CD8-positive, alpha-beta T cell (primary cell): ENCODE measurements at regions of chr15 and their contacts with region 1.

Region 1: DNA sequence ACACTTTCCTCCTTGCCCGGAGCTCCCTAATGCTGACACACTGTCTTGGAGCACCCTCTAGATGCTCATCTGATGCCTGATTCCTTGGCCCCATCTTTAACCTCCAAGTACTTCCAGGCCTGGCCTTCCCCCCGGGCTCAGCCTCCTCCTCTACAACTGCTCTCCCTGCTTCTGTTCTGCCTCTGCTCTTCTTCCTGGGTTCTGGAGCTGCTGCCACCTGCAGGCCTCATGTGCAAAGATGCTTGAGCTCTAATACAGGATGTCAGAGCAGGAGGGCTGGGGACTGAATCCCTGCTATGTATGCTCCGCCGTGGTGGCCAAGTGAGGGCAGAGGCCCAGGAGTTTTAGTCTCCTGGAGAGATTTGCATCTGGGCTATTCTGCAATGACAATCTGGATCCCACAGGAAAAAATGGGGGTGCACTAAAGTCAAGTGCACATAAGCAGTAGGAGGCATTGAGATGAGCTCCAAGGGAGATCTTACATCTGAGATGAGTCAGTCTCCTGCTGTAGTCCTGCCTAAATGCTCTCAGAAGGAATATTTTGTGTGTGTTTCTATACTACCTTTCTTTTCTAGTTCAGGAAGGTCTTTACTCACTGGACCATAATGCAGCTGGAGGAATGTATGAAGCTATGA is 296.3 kb downstream of the UACA start:
- DNase-seq: peak in 7 of 9 experiments; percentile 35 to 71 (median 55)
- ATAC-seq: peak; percentile 79
- H3K4me3 ChIP-seq: no peak overlapping the region
- H3K4me3 Mint-ChIP-seq: no peak overlapping the region
- H3K27ac ChIP-seq: no peak overlapping the region
- H3K27ac Mint-ChIP-seq: no peak overlapping the region
- H3K4me1 ChIP-seq: no peaks in the 10 kb centered on the region
- H3K4me1 Mint-ChIP-seq: peaks cover 5% of the 10 kb centered on the region
- H3K27me3 ChIP-seq: no peaks in the 10 kb centered on the region
- H3K27me3 Mint-ChIP-seq: peaks cover 8% of the 10 kb centered on the region
- CTCF ChIP-seq: peak; percentile 58

Region 2: GRCh38 chr15:69290346-69291164 is 1176.5 kb before region 1 on chr15:
- CTCF ChIA-PET with region 1: no interaction called
- POLR2A ChIA-PET with region 1: no interaction called
- intact Hi-C with region 1: no loop called
- DNase-seq: no peak
- ATAC-seq: no peak
- H3K4me3 ChIP-seq: no peak overlapping the region
- H3K4me3 Mint-ChIP-seq: no peak overlapping the region
- H3K27ac ChIP-seq: no peak overlapping the region
- H3K27ac Mint-ChIP-seq: no peak overlapping the region
- H3K4me1 ChIP-seq: no peaks in the 10 kb centered on the region
- H3K4me1 Mint-ChIP-seq: no peaks in the 10 kb centered on the region
- H3K27me3 ChIP-seq: no peaks in the 10 kb centered on the region
- H3K27me3 Mint-ChIP-seq: no peaks in the 10 kb centered on the region
- CTCF ChIP-seq: no peak

Region 3: GRCh38 chr15:69523010-69524001 is 943.7 kb before region 1 on chr15:
- CTCF ChIA-PET with region 1: interaction called, 3 read pairs
- POLR2A ChIA-PET with region 1: no interaction called
- intact Hi-C with region 1: loop called in 1 of 2 experiments (anchors 1 kb)
- DNase-seq: peak; percentile 29 to 78 (median 60)
- ATAC-seq: peak; percentile 40
- H3K4me3 ChIP-seq: no peak overlapping the region
- H3K4me3 Mint-ChIP-seq: no peak overlapping the region
- H3K27ac ChIP-seq: no peak overlapping the region
- H3K27ac Mint-ChIP-seq: no peak overlapping the region
- H3K4me1 ChIP-seq: no peaks in the 10 kb centered on the region
- H3K4me1 Mint-ChIP-seq: no peaks in the 10 kb centered on the region
- H3K27me3 ChIP-seq: no peaks in the 10 kb centered on the region
- H3K27me3 Mint-ChIP-seq: peaks cover 11% of the 10 kb centered on the region
- CTCF ChIP-seq: peak; percentile 45

Region 4: GRCh38 chr15:69729161-69729748 is 737.8 kb before region 1 on chr15:
- CTCF ChIA-PET with region 1: interaction called, 5 read pairs
- POLR2A ChIA-PET with region 1: no interaction called
- intact Hi-C with region 1: loop called in 1 of 2 experiments (anchors 2 kb)
- DNase-seq: peak; percentile 56 to 86 (median 79)
- ATAC-seq: peak; percentile 62
- H3K4me3 ChIP-seq: no peak overlapping the region
- H3K4me3 Mint-ChIP-seq: no peak overlapping the region
- H3K27ac ChIP-seq: no peak overlapping the region
- H3K27ac Mint-ChIP-seq: no peak overlapping the region
- H3K4me1 ChIP-seq: peaks cover 12% of the 10 kb centered on the region
- H3K4me1 Mint-ChIP-seq: peaks cover 20% of the 10 kb centered on the region
- H3K27me3 ChIP-seq: peaks cover 0 to 4% of the 10 kb centered on the region in 2 experiments
- H3K27me3 Mint-ChIP-seq: no peaks in the 10 kb centered on the region
- CTCF ChIP-seq: peak; percentile 81

Region 5: GRCh38 chr15:70374096-70374495 is 92.9 kb before region 1 on chr15:
- CTCF ChIA-PET with region 1: no interaction called
- POLR2A ChIA-PET with region 1: no interaction called
- intact Hi-C with region 1: no loop called
- DNase-seq: no peak
- ATAC-seq: no peak
- H3K4me3 ChIP-seq: no peak overlapping the region
- H3K4me3 Mint-ChIP-seq: no peak overlapping the region
- H3K27ac ChIP-seq: no peak overlapping the region
- H3K27ac Mint-ChIP-seq: no peak overlapping the region
- H3K4me1 ChIP-seq: no peaks in the 10 kb centered on the region
- H3K4me1 Mint-ChIP-seq: peaks cover 6% of the 10 kb centered on the region
- H3K27me3 ChIP-seq: no peaks in the 10 kb centered on the region
- H3K27me3 Mint-ChIP-seq: peaks cover 14% of the 10 kb centered on the region
- CTCF ChIP-seq: no peak

Region 6: GRCh38 chr15:70447928-70448698 is 18.9 kb before region 1 on chr15:
- CTCF ChIA-PET with region 1: interaction called, 11 read pairs
- POLR2A ChIA-PET with region 1: no interaction called
- intact Hi-C with region 1: no loop called
- DNase-seq: peak; percentile 14 to 74 (median 54)
- ATAC-seq: peak; percentile 69
- H3K4me3 ChIP-seq: peak overlapping the region; percentile 20 to 35
- H3K4me3 Mint-ChIP-seq: peak overlapping the region; percentile 65
- H3K27ac ChIP-seq: peak overlapping the region in 1 of 2 experiments; percentile 31
- H3K27ac Mint-ChIP-seq: peak overlapping the region; percentile 41
- H3K4me1 ChIP-seq: peaks cover 44% of the 10 kb centered on the region
- H3K4me1 Mint-ChIP-seq: peaks cover 42% of the 10 kb centered on the region
- H3K27me3 ChIP-seq: peaks cover 0 to 7% of the 10 kb centered on the region in 2 experiments
- H3K27me3 Mint-ChIP-seq: peaks cover 3% of the 10 kb centered on the region
- CTCF ChIP-seq: no peak

Region 7: DNA sequence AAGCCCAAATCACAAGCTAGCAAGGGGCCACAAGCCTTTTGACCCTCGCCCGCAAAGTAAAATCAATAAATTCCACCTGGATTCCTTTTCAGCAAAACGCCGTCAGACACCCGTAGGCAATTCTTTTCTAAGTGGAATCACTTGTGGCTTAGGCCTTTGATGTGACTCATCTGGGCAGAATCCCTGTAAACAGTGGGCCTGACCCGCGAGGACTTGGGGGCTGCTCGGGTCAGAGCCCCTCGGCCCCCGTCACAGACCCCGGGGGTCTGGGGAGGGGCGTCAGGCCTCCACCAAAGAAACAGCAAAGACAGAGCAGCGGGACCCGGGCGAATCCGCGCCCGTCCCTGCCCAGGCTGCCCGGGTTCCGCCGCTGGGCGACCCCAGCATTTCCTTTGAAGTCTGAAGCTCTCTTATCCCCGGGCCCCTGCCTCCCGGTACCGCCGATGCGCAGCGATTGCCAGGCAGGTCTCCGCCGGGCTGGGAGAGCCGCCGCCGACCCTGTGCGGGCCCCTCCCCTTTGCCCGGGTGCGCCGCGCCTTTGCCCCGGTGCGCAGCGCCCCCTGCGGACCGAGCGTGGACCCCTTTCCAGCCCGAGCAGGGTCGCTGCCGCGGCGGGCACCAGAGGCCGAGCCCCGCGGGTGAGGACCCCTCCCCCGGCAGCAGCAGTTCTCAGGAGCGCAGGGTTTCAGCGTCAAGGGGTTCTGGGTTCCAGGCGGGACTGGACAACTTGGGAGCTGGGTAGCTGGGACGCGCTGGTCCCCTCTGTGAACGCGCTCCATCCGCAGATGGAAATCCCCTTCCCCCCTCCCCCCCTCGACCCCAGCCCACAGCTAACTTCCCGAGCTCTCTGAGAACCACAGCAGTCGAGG is 118.1 kb after region 1 on chr15:
- CTCF ChIA-PET with region 1: interaction called, 12 read pairs
- POLR2A ChIA-PET with region 1: no interaction called
- intact Hi-C with region 1: no loop called
- DNase-seq: peak; percentile 25 to 70 (median 59)
- ATAC-seq: peak; percentile 82
- H3K4me3 ChIP-seq: peak overlapping the region in 1 of 2 experiments; percentile 33
- H3K4me3 Mint-ChIP-seq: peak overlapping the region; percentile 53
- H3K27ac ChIP-seq: no peak overlapping the region
- H3K27ac Mint-ChIP-seq: no peak overlapping the region
- H3K4me1 ChIP-seq: peaks cover 12% of the 10 kb centered on the region
- H3K4me1 Mint-ChIP-seq: peaks cover 10% of the 10 kb centered on the region
- H3K27me3 ChIP-seq: peaks cover 0 to 7% of the 10 kb centered on the region in 2 experiments
- H3K27me3 Mint-ChIP-seq: peaks cover 20% of the 10 kb centered on the region
- CTCF ChIP-seq: peak; percentile 69